Esophagus muscularis mucosa (tissue), 4 donors: ENCODE measurements at regions of chr17 and their contacts with region 1.

Region 1: DNA sequence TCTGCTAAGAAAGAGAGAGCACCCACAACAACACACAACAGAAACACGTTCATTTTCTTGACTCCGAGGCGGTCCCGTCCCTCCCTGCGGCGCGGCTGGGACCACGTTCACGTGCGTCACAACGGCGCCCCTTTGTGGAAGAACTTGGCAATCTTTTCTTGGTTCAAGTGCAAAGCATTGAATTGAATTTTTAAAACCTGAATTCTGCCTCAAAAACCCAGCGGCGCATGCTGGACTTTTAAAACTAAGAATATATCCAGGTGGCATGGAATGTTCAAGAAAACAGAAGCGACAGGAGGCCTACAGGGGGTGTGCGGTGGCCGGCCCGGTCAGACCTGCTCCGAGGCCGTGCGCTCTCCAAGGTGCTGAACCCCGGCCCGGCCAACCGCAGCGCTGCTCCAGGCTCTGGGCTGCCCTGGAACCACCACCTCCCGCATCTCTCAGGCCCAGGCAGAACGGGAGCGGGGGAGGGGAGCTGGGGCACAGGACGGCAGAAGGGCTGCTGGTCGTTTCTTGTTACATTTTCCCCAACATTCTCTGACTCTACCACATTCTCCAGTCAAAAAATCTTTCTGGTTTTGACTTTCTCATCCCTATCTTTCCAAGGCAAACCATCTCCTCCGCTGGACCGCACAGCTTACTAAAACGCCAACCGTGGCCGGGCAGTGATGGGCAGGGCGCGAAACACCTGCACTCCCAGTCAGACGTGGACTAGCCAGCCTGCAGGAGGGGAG is 3.4 kb upstream of the HEXD start:
- DNase-seq: no peak
- H3K4me3 ChIP-seq: peak overlapping the region in 2 of 4 donors; percentile 7 to 12
- H3K27ac ChIP-seq: no peak overlapping the region
- H3K4me1 ChIP-seq: peaks cover 19 to 31% (median 27%) of the 10 kb centered on the region in 4 donors
- H3K27me3 ChIP-seq: no peaks in the 10 kb centered on the region
- CTCF ChIP-seq: peak; percentile 57 to 78 (median 63)
- EP300 ChIP-seq: no peak
- POLR2A ChIP-seq: no peak

Region 2: GRCh38 chr17:82351716-82352488 is 62.8 kb before region 1 on chr17:
- intact Hi-C with region 1: loop called (anchors 2 kb)
- DNase-seq: peak; percentile 96
- H3K4me3 ChIP-seq: no peak overlapping the region
- H3K27ac ChIP-seq: no peak overlapping the region
- H3K4me1 ChIP-seq: peaks cover 6 to 23% (median 17%) of the 10 kb centered on the region in 4 donors
- H3K27me3 ChIP-seq: peaks cover 0 to 27% (median 0%) of the 10 kb centered on the region in 4 donors
- CTCF ChIP-seq: peak; percentile 91 to 95 (median 94)
- EP300 ChIP-seq: no peak
- POLR2A ChIP-seq: no peak